ENCODE measurements at regions of chr19 and their contacts with region 1.

Region 1: DNA sequence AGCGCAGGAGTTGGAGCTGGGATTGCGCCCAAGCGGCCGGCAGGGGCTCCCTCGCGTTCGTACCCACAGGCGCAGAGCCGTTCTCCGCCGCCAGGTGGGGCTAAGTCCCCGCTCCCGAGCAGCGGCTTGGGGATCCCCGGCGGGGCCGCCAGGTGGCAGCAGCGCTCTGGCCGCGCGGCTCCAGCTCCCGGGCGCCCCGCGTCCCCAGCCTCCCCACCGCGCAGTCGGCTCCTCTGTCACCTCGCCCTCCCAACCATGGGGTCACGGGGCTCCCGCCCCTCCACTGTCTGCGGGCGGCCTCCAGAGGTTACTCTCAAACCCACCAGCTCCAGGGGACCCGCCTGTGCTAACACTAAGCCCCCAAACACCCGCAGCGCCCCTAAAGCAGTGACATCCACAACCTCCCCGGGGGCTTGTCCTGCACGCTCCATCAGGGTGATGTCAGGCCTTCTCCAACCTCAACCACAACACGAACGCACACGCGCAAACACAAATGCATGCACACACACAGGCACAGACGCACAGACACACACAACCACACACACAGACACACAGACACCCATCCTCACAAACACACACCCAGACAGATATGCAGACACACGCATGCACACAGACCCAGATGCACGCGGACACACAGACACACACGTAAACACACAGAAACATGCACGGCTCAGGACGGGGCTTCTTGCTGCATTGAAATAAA is 18.4 kb upstream of the KCTD15 start:
- DNase-seq: peak; percentile 85 to 96
- ATAC-seq: peak; percentile 61 to 85
- H3K4me3 ChIP-seq: peak overlapping the region; percentile 42
- H3K27ac ChIP-seq: peak overlapping the region in 1 of 2 experiments; percentile 42; a peak in 2 of 6 replicates
- H3K4me1 ChIP-seq: peaks cover 27% of the 10 kb centered on the region
- CTCF ChIP-seq: peak; percentile 100
- EP300 ChIP-seq: no peak
- POLR2A ChIP-seq: no peak
- RAD21 ChIP-seq: peak; percentile 100

Region 2: DNA sequence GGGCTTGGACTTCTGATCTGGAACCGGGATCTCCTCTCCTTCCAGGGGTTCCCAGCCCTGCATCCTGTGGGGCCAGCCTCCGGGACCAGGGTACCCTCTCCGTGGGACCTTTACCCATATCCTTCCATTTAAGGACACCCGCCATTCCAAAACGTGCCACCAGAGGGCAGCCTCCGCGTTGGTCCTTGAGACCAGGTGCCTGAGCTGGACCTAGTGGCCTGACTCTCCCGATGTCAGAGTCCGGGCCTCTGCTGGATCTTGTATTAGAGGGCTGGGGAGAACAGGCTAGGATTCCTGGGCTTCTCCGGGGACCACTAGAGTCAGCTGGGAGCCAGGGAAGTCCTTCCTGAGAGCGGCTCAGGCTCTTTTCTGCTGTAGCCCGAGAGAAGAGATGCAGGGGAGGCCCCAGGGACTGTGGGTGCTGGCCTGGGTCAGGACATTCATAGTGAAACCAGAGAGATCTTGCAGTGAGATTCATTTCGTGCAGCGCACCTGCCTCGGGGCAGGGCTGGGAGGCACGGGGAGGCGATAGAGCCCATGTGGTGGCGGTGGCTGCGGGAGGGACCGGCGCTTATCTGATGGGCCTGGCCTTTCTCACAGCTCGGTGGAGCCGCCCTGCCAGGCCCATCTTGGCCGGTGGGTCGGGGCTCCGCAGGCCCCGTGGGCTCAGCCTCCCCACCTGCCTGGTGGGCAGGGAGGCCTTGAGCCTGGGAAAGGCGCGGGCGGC is 542.8 kb before region 1 on chr19:
- CTCF ChIA-PET with region 1: interaction called, 48 read pairs
- POLR2A ChIA-PET with region 1: no interaction called
- DNase-seq: peak; percentile 88 to 98
- ATAC-seq: peak; percentile 66 to 90
- H3K4me3 ChIP-seq: no peak overlapping the region
- H3K27ac ChIP-seq: 0 out of 6 replicates have a peak overlapping the region, but pooled peaks of 1 of the 2 experiments have one; percentile 13
- H3K4me1 ChIP-seq: no peaks in the 10 kb centered on the region; the same call in 2 of the 3 replicates
- CTCF ChIP-seq: peak; percentile 99
- EP300 ChIP-seq: no peak
- POLR2A ChIP-seq: no peak
- RAD21 ChIP-seq: peak; percentile 94 to 95

Region 3: DNA sequence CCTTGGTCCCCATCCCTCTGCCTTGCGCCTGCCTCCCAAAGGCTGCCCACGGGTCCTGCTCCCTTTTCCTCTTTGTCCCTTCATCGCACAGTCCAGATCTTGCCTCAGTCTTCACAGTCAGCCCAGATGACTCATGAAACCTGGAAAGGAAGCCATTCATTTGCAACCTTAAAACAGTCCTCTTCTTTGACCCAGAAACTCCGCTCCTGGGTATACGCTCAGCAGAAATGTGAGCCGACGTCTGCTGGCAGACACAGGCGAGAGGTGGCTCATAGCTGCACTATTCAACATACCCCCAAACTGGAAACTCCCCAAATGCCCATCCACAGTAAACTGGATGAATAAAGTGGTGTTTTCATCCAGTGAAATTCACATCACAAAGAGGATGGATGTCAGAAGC is 243.0 kb before region 1 on chr19:
- CTCF ChIA-PET with region 1: interaction called, 11 read pairs
- POLR2A ChIA-PET with region 1: no interaction called
- DNase-seq: no peak
- ATAC-seq: peak; percentile 8 to 20; a peak in 1 of 6 replicates
- H3K4me3 ChIP-seq: no peak overlapping the region
- H3K27ac ChIP-seq: no peak overlapping the region
- H3K4me1 ChIP-seq: no peaks in the 10 kb centered on the region
- CTCF ChIP-seq: no peak
- EP300 ChIP-seq: no peak
- POLR2A ChIP-seq: no peak
- RAD21 ChIP-seq: no peak

Region 4: GRCh38 chr19:33665776-33666595 is 112.3 kb before region 1 on chr19:
- CTCF ChIA-PET with region 1: no interaction called
- POLR2A ChIA-PET with region 1: no interaction called
- DNase-seq: no peak
- ATAC-seq: no peak
- H3K4me3 ChIP-seq: no peak overlapping the region
- H3K27ac ChIP-seq: no peak overlapping the region
- H3K4me1 ChIP-seq: no peaks in the 10 kb centered on the region
- CTCF ChIP-seq: no peak
- EP300 ChIP-seq: no peak; a peak in 1 of 5 replicates
- POLR2A ChIP-seq: no peak
- RAD21 ChIP-seq: no peak

Region 5: DNA sequence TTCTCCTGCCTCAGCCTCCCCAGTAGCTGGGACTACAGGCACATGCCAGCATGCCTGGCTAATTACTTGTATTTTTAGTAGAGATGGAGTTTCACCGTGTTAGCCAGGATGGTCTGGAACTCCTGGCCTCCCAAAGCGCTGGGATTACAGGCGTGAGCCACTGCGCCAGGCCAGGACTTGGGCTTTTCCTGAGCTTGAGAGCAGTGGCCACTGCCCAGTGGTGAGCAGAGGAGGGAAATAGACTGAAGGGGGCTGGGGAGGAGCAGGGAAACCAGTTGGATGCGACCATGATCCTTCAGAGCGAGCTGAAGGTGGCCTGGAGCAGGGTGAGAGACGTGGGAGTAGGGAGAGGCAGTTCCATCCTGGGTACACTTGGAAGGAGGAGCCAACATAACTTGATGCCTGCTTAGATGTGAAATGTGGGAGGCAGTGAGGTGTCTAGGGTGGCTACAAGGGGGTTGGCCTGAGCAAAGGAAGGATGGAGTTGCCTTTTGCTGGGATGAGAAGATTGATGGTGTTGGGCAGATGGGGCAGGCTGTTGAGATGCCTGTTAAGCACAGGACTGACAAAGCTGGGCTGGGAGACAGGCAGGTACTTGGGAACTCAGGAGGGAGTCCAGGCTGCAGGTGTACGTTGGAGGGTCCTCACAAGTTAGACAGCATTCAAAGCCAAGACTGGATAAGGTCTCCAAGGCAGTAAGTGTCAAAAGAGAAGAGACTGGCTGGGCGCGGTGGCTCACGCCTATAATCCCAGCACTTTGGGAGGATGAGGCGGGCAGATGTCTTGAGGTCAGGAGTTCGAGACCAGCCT is 50.2 kb after region 1 on chr19:
- CTCF ChIA-PET with region 1: interaction called, 30 read pairs
- POLR2A ChIA-PET with region 1: no interaction called
- DNase-seq: no peak
- ATAC-seq: peak; percentile 31 to 41; a peak in 4 of 6 replicates
- H3K4me3 ChIP-seq: no peak overlapping the region
- H3K27ac ChIP-seq: no peak overlapping the region
- H3K4me1 ChIP-seq: no peaks in the 10 kb centered on the region
- CTCF ChIP-seq: no peak
- EP300 ChIP-seq: no peak
- POLR2A ChIP-seq: no peak
- RAD21 ChIP-seq: no peak

Region 6: DNA sequence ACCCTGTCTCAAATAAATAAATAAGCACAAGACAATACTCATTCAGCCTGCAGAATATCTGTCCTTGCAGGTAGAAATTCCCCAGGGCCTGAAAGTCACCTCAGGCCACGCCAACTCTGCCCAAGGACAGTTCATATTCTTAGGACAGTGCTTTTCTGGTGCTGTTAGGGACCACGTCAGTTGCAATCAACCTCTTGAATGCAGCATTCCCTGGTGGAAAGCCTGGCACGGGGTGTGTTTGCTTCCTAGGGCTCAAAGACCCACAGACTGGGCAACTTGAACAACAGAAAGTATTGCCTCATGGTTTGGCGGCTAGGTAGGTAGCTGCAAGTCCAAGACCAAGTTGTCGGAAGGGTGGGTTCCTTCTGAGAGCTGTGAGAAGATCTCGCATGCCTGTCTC is 178.7 kb after region 1 on chr19:
- CTCF ChIA-PET with region 1: interaction called, 16 read pairs
- POLR2A ChIA-PET with region 1: no interaction called
- DNase-seq: no peak
- ATAC-seq: no peak; a peak in 1 of 6 replicates
- H3K4me3 ChIP-seq: no peak overlapping the region
- H3K27ac ChIP-seq: no peak overlapping the region
- H3K4me1 ChIP-seq: no peaks in the 10 kb centered on the region
- CTCF ChIP-seq: no peak
- EP300 ChIP-seq: no peak
- POLR2A ChIP-seq: no peak
- RAD21 ChIP-seq: no peak

Region 7: DNA sequence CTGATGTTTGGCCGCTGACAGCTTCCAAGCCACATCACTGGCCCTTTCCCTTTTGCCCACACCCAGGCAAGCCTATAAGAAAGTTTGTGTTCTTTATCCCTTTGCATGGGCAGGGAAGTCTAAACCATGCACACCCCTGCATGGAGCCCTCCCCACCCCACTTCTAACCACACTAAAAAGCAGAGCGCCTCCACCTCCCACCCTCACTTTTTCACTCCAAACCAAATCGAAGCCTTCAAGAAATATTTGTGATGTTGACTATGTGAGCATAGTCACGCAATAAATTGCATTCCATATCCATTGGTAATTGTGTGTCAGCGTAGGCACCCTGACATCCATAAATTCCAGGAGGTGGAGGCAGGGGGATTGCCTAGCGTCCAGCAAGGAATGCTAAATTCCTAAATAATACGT is 289.6 kb after region 1 on chr19:
- CTCF ChIA-PET with region 1: interaction called, 34 read pairs
- POLR2A ChIA-PET with region 1: no interaction called
- DNase-seq: peak; percentile 78 to 89
- ATAC-seq: peak; percentile 88 to 89
- H3K4me3 ChIP-seq: peak overlapping the region; percentile 1; the same call in 1 of the 3 replicates
- H3K27ac ChIP-seq: peak overlapping the region in 1 of 2 experiments; percentile 62; a peak in 3 of 6 replicates
- H3K4me1 ChIP-seq: peaks cover 18% of the 10 kb centered on the region
- CTCF ChIP-seq: no peak
- EP300 ChIP-seq: peak in 1 of 2 experiments; percentile 59; a peak in 1 of 5 replicates
- POLR2A ChIP-seq: no peak
- RAD21 ChIP-seq: no peak

Region 8: GRCh38 chr19:34145741-34146202 is 367.5 kb after region 1 on chr19:
- CTCF ChIA-PET with region 1: interaction called, 258 read pairs
- POLR2A ChIA-PET with region 1: no interaction called
- DNase-seq: peak; percentile 73 to 75
- ATAC-seq: peak; percentile 66 to 81; a peak in 5 of 6 replicates
- H3K4me3 ChIP-seq: no peak overlapping the region
- H3K27ac ChIP-seq: no peak overlapping the region
- H3K4me1 ChIP-seq: no peaks in the 10 kb centered on the region
- CTCF ChIP-seq: peak; percentile 99
- EP300 ChIP-seq: no peak
- POLR2A ChIP-seq: no peak
- RAD21 ChIP-seq: peak; percentile 96 to 97

Measured in A549 (cell line).